ENCODE measurements at regions of chr10 and their contacts with region 1.

Region 1: DNA sequence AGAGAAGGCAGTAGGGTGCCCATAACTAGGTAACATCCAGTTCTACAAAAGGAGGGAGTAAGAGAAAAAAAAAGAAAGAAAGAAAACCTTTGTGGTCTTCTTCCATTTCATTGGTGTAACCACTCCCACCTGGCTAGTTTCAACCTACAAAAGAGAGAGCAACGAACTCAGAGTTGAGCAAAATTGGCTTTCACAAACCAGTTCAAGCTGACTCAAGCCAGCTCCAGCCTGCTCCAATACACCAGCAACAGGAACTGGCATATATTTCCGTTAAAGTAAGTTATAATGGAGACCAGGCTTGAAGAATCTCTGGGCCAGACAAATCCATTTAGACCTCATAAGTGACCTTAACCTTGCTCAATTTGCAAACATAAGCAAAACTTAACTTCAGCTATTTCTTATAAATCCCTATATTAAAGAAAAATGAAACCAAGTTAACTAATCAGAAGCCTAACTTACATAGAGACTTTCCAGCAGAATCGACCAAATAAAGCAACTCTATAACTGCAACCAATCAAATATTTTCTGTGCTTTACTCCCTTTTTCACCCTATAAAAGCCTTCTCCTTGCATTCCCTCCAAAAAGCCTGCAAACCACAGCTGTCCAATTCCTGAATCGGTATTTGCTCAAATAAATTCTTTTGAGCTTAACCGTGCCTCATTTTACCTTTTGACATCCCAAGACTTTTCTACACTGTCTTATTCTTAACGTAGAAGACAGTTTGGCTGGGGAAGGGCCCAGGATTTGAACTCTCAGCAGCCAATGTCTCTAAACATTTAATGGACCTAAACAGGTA is 10.1 kb downstream of the ANKRD22 start:
- DNase-seq: no peak
- H3K4me3 ChIP-seq: no peak overlapping the region
- CTCF ChIP-seq: no peak

Region 2: GRCh38 chr10:88744002-88744401 is 97.5 kb before region 1 on chr10:
- in situ Hi-C with region 1: no loop called
- DNase-seq: no peak
- H3K4me3 ChIP-seq: no peak overlapping the region
- CTCF ChIP-seq: no peak

Region 3: DNA sequence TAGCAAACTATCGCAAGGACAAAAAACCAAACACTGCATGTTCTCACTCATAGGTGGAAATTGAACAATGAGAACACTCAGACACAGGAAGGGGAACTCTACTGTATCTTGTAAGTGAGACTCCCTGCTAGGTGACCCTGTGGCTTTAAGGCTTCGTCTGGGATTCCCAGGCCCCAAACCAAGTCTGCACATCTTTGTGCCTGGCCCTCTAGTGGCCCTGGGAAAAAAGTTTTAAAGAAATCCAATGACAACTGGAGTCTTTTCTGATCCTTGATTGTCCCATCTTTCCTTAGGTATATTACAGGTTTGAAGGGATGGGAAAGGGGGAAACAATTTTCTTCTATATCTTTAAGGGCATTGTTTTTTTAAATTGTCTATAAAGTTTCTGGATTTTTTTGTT is 49.6 kb before region 1 on chr10:
- in situ Hi-C with region 1: loop called (anchors 5 kb)
- DNase-seq: no peak
- H3K4me3 ChIP-seq: no peak overlapping the region
- CTCF ChIP-seq: peak; percentile 51